ENCODE measurements at regions of chr5 and their contacts with region 1.

Region 1: DNA sequence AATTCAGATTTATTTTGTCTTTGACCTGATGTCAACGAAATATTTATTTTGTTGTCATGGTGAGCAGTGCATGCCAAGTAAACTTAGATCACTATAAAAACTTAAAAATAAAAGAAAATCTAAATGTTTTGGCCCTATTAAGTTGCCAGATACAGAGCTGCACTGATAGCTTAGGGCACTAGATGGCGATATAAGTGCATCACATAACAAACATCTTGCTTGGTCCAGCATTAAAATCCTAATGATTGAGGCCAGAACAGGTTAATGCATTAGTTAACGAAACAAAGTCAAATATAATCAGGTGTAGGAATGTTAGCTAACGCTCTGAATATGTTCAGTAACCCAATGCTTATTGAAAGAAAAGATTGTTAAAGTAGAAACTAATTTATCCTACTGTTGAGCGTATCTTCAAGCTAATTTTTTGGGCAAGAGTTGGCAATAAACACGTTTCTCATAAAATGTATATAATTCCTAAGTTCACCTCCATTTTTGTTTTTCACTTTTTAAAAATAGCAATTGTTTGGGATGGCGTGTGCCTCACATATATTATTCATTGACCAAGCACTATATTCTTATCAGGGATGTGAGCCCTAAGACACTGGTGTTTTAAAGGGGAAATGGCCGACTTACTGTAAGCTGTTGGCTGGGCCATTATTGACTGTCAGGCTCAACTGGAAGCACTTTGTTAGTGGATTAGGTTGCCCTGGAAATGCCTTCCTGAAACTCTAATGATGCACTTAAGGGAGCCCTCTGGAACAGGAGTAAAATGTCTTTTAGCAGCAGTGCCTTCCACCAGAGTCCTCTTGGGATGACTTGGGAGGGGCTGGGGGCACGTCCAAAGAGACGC is 33.3 kb downstream of the KCTD16 start:
- DNase-seq: peak; percentile 81
- H3K4me3 ChIP-seq: no peak overlapping the region
- H3K27ac ChIP-seq: no peak overlapping the region
- H3K4me1 ChIP-seq: peaks cover 9% of the 10 kb centered on the region
- H3K27me3 ChIP-seq: no peaks in the 10 kb centered on the region
- CTCF ChIP-seq: peak; percentile 69 to 75
- POLR2A ChIP-seq: no peak

Region 2: DNA sequence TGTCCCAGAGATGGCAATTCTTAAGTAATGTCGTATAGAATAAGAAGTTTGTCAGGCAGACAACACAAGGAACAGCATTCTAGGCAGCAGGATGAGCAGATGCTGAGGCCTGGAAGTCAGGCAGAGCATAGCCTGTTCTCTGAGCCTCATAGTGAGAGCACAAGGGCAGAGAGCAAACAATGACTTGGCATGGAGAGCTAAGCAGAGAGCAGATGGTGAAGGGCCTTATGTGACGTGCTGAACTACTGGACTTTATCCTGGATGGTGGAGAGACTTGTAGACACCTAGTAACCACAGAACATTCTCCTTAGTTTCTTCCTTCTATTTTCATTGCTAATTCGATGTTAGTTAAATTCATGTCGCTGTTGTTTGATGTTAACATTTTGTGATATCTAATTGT is 26.8 kb after region 1 on chr5:
- CTCF ChIA-PET with region 1: no interaction called
- POLR2A ChIA-PET with region 1: no interaction called
- dilution Hi-C with region 1: no loop called
- intact Hi-C with region 1: no loop called
- DNase-seq: no peak
- H3K4me3 ChIP-seq: no peak overlapping the region
- H3K27ac ChIP-seq: no peak overlapping the region
- H3K4me1 ChIP-seq: no peaks in the 10 kb centered on the region
- H3K27me3 ChIP-seq: no peaks in the 10 kb centered on the region
- CTCF ChIP-seq: no peak
- POLR2A ChIP-seq: no peak

Region 3: DNA sequence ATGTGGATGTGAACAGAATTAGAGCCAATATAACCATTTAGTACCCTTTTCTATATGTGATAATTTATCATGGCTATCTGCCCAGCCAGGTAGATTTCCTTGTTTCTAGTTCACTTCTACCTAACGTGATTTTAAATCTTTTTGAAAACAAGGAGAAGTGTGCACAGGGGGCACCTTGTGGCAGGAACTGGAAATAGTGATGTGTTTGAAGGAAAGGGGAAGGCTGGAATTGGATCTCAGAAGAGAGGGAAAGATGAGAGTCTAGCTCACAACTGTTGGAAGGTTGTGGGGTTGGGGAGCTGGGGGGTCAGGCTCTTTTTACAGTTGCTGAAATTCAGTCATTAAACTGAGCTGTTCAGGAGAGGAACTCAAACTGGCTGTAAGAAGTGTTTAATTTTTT is 186.2 kb after region 1 on chr5:
- CTCF ChIA-PET with region 1: interaction called, 14 read pairs
- POLR2A ChIA-PET with region 1: no interaction called
- dilution Hi-C with region 1: no loop called
- intact Hi-C with region 1: loop called (anchors 2 kb)
- DNase-seq: peak; percentile 3
- H3K4me3 ChIP-seq: no peak overlapping the region
- H3K27ac ChIP-seq: no peak overlapping the region
- H3K4me1 ChIP-seq: no peaks in the 10 kb centered on the region
- H3K27me3 ChIP-seq: no peaks in the 10 kb centered on the region
- CTCF ChIP-seq: peak in 1 of 2 donors; percentile 7
- POLR2A ChIP-seq: no peak

Region 4: GRCh38 chr5:145237843-145238242 is 1033.9 kb after region 1 on chr5:
- CTCF ChIA-PET with region 1: interaction called, 103 read pairs
- POLR2A ChIA-PET with region 1: no interaction called
- dilution Hi-C with region 1: no loop called
- intact Hi-C with region 1: loop called (anchors 1 kb)
- DNase-seq: peak; percentile 72
- H3K4me3 ChIP-seq: no peak overlapping the region
- H3K27ac ChIP-seq: no peak overlapping the region
- H3K4me1 ChIP-seq: peaks cover 3% of the 10 kb centered on the region
- H3K27me3 ChIP-seq: no peaks in the 10 kb centered on the region
- CTCF ChIP-seq: peak; percentile 71 to 73
- POLR2A ChIP-seq: no peak

Region 5: GRCh38 chr5:145681686-145682085 is 1477.7 kb after region 1 on chr5:
- CTCF ChIA-PET with region 1: interaction called, 18 read pairs
- POLR2A ChIA-PET with region 1: no interaction called
- dilution Hi-C with region 1: no loop called
- intact Hi-C with region 1: loop called (anchors 1 kb)
- DNase-seq: peak; percentile 75
- H3K4me3 ChIP-seq: no peak overlapping the region
- H3K27ac ChIP-seq: no peak overlapping the region
- H3K4me1 ChIP-seq: no peaks in the 10 kb centered on the region
- H3K27me3 ChIP-seq: no peaks in the 10 kb centered on the region
- CTCF ChIP-seq: peak; percentile 78 to 86
- POLR2A ChIP-seq: no peak

Region 6: DNA sequence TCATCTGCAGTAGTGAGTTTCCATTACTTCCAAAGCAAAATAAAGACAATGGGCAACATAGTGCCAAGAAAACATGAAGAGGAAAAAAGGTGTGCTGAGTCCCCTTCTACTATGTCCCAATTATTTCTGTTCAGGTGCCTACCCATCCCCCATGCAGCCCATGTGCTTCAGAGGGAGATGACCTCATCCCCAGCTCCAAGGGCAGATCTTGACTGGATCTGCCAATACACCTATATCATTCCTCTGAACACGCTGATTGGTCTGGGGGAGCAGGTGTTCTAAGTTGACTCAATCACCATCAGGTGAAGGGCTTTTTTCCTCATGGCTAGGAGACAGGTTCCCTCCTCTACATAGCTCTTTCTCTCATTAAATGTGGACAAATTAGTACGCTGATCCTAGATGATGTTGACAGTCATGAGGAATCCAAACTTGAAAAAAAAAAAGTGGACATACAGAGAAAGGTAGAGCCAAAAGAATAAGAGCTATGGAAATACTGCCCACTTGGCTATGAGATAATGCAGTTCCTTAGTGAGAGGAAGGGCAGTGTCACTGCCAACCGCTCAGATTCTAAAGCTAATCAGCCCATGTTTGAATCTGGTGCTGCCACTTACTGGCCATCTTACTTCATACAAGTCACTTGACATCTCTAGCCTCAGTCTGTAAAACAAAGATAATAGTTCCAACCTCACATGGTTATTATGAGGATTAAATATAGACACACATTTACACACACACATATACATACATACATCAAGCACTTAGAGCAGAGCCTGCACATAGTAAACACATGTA is 1608.1 kb after region 1 on chr5:
- CTCF ChIA-PET with region 1: interaction called, 41 read pairs
- POLR2A ChIA-PET with region 1: no interaction called
- dilution Hi-C with region 1: no loop called
- intact Hi-C with region 1: no loop called
- DNase-seq: peak; percentile 69
- H3K4me3 ChIP-seq: no peak overlapping the region
- H3K27ac ChIP-seq: no peak overlapping the region
- H3K4me1 ChIP-seq: no peaks in the 10 kb centered on the region
- H3K27me3 ChIP-seq: no peaks in the 10 kb centered on the region
- CTCF ChIP-seq: peak; percentile 27 to 43
- POLR2A ChIP-seq: no peak

Region 7: DNA sequence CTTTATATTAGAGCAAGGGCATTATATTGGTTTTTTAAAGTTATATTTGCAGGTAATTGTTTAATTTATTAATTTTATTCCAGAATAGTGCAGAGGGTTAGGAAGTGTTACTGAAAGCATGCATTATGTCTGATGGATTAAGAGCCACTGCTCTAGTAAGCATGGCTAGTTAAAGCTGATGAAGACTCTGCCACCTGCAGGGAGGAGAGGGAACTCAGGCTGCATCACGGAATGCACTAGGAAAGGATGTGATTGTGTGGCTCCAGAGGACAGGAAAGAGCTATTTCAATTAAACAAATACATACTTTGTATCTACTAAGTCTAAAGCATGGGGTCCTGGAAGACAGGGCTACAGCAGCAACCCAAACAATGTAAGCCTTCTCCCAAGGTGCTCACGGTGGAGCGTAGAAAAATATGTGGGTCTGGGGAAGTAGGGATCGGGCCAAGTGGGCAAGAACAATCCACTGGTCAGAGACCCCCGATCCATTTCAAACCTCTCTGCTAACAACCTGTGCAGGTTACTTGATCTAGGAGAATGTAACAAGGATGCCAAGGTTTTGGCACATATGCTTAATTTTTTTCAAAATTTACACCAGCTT is 1684.1 kb after region 1 on chr5:
- CTCF ChIA-PET with region 1: interaction called, 63 read pairs
- POLR2A ChIA-PET with region 1: no interaction called
- dilution Hi-C with region 1: no loop called
- intact Hi-C with region 1: loop called (anchors 1 kb)
- DNase-seq: peak; percentile 64
- H3K4me3 ChIP-seq: no peak overlapping the region
- H3K27ac ChIP-seq: no peak overlapping the region
- H3K4me1 ChIP-seq: no peaks in the 10 kb centered on the region
- H3K27me3 ChIP-seq: peaks cover 0 to 9% of the 10 kb centered on the region in 2 experiments
- CTCF ChIP-seq: peak; percentile 63 to 78
- POLR2A ChIP-seq: no peak

Region 8: GRCh38 chr5:146130440-146131045 is 1926.6 kb after region 1 on chr5:
- CTCF ChIA-PET with region 1: interaction called, 41 read pairs
- POLR2A ChIA-PET with region 1: no interaction called
- dilution Hi-C with region 1: no loop called
- intact Hi-C with region 1: no loop called
- DNase-seq: peak; percentile 28
- H3K4me3 ChIP-seq: no peak overlapping the region
- H3K27ac ChIP-seq: no peak overlapping the region
- H3K4me1 ChIP-seq: no peaks in the 10 kb centered on the region
- H3K27me3 ChIP-seq: no peaks in the 10 kb centered on the region
- CTCF ChIP-seq: peak; percentile 31 to 41
- POLR2A ChIP-seq: no peak

Measured in endothelial cell of umbilical vein (primary cell).